ENCODE measurements at regions of chr11 and their contacts with region 1.

Region 1: GRCh38 chr11:61816736-61817455 is at the start of gene FADS1:
- DNase-seq: peak; percentile 92
- ATAC-seq: peak; percentile 72
- H3K4me3 Mint-ChIP-seq: peak within 1 kb of the TSS; percentile 96
- H3K27ac Mint-ChIP-seq: peak within 1 kb of the TSS; percentile 83
- H3K4me1 Mint-ChIP-seq: peaks cover 5% of the 10 kb centered on the region
- H3K27me3 Mint-ChIP-seq: peaks cover 4% of the 10 kb centered on the region
- CTCF ChIP-seq: peak; percentile 59
- total RNA-seq, gene FADS1: 33.9 to 34.4 TPM

Region 2: GRCh38 chr11:61827571-61828378 is 10.9 kb after region 1 on chr11 and contains the start of gene FADS2:
- CTCF ChIA-PET with region 1: interaction called, 37 read pairs
- POLR2A ChIA-PET with region 1: interaction called, 44 read pairs
- intact Hi-C with region 1: no loop called
- DNase-seq: peak; percentile 94
- ATAC-seq: peak; percentile 87
- H3K4me3 Mint-ChIP-seq: peak within 1 kb of the TSS; percentile 86
- H3K27ac Mint-ChIP-seq: peak within 1 kb of the TSS; percentile 91
- H3K4me1 Mint-ChIP-seq: peaks cover 32% of the 10 kb centered on the region
- H3K27me3 Mint-ChIP-seq: peaks cover 9% of the 10 kb centered on the region
- CTCF ChIP-seq: no peak
- total RNA-seq, gene FADS2: 131 to 134 TPM

Region 3: GRCh38 chr11:61834278-61835048 is 17.6 kb after region 1 on chr11:
- CTCF ChIA-PET with region 1: interaction called, 37 read pairs
- POLR2A ChIA-PET with region 1: interaction called, 44 read pairs
- intact Hi-C with region 1: no loop called
- DNase-seq: peak; percentile 89
- ATAC-seq: peak; percentile 99
- H3K4me3 Mint-ChIP-seq: peak overlapping the region; percentile 43
- H3K27ac Mint-ChIP-seq: peak overlapping the region; percentile 93
- H3K4me1 Mint-ChIP-seq: peaks cover 50% of the 10 kb centered on the region
- H3K27me3 Mint-ChIP-seq: peaks cover 7% of the 10 kb centered on the region
- CTCF ChIP-seq: no peak

Region 4: DNA sequence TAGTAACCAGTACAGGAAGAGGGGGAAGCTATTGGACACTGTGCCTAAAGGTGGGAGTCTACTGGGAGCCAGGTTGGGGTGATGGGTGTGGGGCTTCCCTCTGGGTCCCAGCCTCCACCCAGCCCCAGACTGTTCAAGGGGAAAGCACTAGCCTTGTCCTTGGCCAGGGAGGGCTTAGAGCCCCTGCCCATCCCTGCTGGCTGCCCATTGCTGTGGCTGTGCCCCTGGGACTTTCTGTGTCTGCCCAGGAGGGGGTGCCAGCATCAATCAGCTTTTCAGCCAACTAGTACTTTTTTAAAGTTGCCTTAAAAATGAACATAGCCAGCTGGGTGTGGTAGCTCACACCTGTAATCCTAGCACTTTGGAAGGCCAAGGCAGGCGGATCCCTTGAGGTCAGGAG is 326.8 kb after region 1 on chr11:
- CTCF ChIA-PET with region 1: no interaction called
- POLR2A ChIA-PET with region 1: no interaction called
- intact Hi-C with region 1: no loop called
- DNase-seq: no peak
- ATAC-seq: no peak
- H3K4me3 Mint-ChIP-seq: no peak overlapping the region
- H3K27ac Mint-ChIP-seq: no peak overlapping the region
- H3K4me1 Mint-ChIP-seq: no peaks in the 10 kb centered on the region
- H3K27me3 Mint-ChIP-seq: no peaks in the 10 kb centered on the region
- CTCF ChIP-seq: no peak

Measured in activated CD8-positive, alpha-beta T cell treated with anti-CD3 and anti-CD28 coated beads for 36 hours (primary cell).